HCT116 (cell line): ENCODE measurements at regions of chr15 and their contacts with region 1.

Region 1: DNA sequence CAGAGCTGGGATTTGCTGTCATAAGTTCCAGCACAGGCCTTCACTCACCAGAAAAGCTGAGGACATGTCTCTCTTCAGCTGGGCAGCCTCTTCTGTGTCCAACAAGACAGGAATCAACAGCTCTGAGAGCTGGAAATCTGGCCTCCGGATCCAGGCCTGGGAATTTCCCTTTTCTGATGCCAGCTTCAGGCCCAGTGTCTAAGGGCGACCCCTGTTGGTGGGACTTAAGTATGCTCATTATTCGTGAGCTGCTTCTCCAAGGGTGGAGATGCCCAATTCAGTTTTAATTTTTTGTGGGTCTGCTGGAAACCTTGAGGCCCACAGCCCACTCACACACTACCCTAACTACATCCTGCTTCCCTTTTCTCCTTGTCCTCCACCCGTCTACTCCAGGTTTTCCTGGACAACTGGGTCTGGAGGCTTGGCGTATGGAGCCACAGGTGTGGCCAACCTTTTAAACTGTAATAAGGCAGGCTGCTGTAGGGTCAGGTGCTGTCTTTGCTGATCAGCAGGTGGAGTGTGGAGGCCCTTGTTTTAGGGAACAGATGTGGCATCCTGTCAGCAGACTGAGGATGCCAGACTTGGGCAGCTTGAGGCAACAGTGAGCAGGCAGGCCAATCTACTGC is 2.6 kb upstream of the CEMIP start:
- DNase-seq: peak; percentile 66
- ATAC-seq: peak; percentile 52
- H3K4me3 ChIP-seq: no peak overlapping the region
- H3K27ac ChIP-seq: no peak overlapping the region
- H3K4me1 ChIP-seq: peaks cover 4 to 19% of the 10 kb centered on the region in 2 experiments; a peak in 2 of 4 replicates
- H3K27me3 ChIP-seq: no peaks in the 10 kb centered on the region
- CTCF ChIP-seq: peak; percentile 74 to 94 (median 90)
- POLR2A ChIP-seq: no peak
- RAD21 ChIP-seq: peak; percentile 93

Region 2: GRCh38 chr15:80219955-80220354 is 556.6 kb before region 1 on chr15:
- CTCF ChIA-PET with region 1: no interaction called
- POLR2A ChIA-PET with region 1: no interaction called
- RAD21 ChIA-PET with region 1: no interaction called
- intact Hi-C with region 1: no loop called
- DNase-seq: no peak
- ATAC-seq: no peak
- H3K4me3 ChIP-seq: no peak overlapping the region
- H3K27ac ChIP-seq: no peak overlapping the region
- H3K4me1 ChIP-seq: no peaks in the 10 kb centered on the region
- H3K27me3 ChIP-seq: no peaks in the 10 kb centered on the region
- CTCF ChIP-seq: no peak
- POLR2A ChIP-seq: no peak
- RAD21 ChIP-seq: no peak

Region 3: GRCh38 chr15:80436511-80437307 is 339.8 kb before region 1 on chr15:
- CTCF ChIA-PET with region 1: interaction called, 3 read pairs
- POLR2A ChIA-PET with region 1: no interaction called
- RAD21 ChIA-PET with region 1: no interaction called
- intact Hi-C with region 1: loop called (anchors 5 kb)
- DNase-seq: peak; percentile 70
- ATAC-seq: peak; percentile 91
- H3K4me3 ChIP-seq: peak overlapping the region; percentile 10 to 46; a peak in 3 of 4 replicates
- H3K27ac ChIP-seq: peak overlapping the region; percentile 59
- H3K4me1 ChIP-seq: peaks cover 16 to 27% of the 10 kb centered on the region in 2 experiments
- H3K27me3 ChIP-seq: no peaks in the 10 kb centered on the region
- CTCF ChIP-seq: no peak
- POLR2A ChIP-seq: no peak
- RAD21 ChIP-seq: no peak

Region 4: GRCh38 chr15:80567721-80568157 is 208.8 kb before region 1 on chr15:
- CTCF ChIA-PET with region 1: interaction called, 136 read pairs
- POLR2A ChIA-PET with region 1: interaction called, 4 read pairs
- RAD21 ChIA-PET with region 1: interaction called, 9 to 22 read pairs
- intact Hi-C with region 1: loop called (anchors 1 kb)
- DNase-seq: peak; percentile 72
- ATAC-seq: peak; percentile 97
- H3K4me3 ChIP-seq: no peak overlapping the region
- H3K27ac ChIP-seq: no peak overlapping the region
- H3K4me1 ChIP-seq: no peaks in the 10 kb centered on the region
- H3K27me3 ChIP-seq: no peaks in the 10 kb centered on the region
- CTCF ChIP-seq: peak; percentile 75 to 99 (median 88)
- POLR2A ChIP-seq: no peak
- RAD21 ChIP-seq: peak; percentile 96

Region 5: GRCh38 chr15:80660122-80660521 is 116.4 kb before region 1 on chr15:
- CTCF ChIA-PET with region 1: interaction called, 12 read pairs
- POLR2A ChIA-PET with region 1: no interaction called
- RAD21 ChIA-PET with region 1: interaction called, 5 to 7 read pairs
- intact Hi-C with region 1: loop called (anchors 1 kb)
- DNase-seq: no peak
- ATAC-seq: peak; percentile 89
- H3K4me3 ChIP-seq: no peak overlapping the region
- H3K27ac ChIP-seq: no peak overlapping the region
- H3K4me1 ChIP-seq: no peaks in the 10 kb centered on the region; a peak in 1 of 4 replicates
- H3K27me3 ChIP-seq: no peaks in the 10 kb centered on the region
- CTCF ChIP-seq: peak; percentile 32 to 49 (median 32); a peak in 5 of 6 replicates
- POLR2A ChIP-seq: no peak
- RAD21 ChIP-seq: peak; percentile 52

Region 6: GRCh38 chr15:80787316-80787715 is 10.8 kb after region 1 on chr15:
- CTCF ChIA-PET with region 1: interaction called, 15 read pairs
- POLR2A ChIA-PET with region 1: no interaction called
- RAD21 ChIA-PET with region 1: no interaction called
- intact Hi-C with region 1: no loop called
- DNase-seq: no peak
- ATAC-seq: no peak
- H3K4me3 ChIP-seq: no peak overlapping the region
- H3K27ac ChIP-seq: no peak overlapping the region
- H3K4me1 ChIP-seq: no peaks in the 10 kb centered on the region
- H3K27me3 ChIP-seq: no peaks in the 10 kb centered on the region
- CTCF ChIP-seq: no peak
- POLR2A ChIP-seq: no peak
- RAD21 ChIP-seq: no peak